ENCODE measurements at regions of chr5 and their contacts with region 1.

Region 1: DNA sequence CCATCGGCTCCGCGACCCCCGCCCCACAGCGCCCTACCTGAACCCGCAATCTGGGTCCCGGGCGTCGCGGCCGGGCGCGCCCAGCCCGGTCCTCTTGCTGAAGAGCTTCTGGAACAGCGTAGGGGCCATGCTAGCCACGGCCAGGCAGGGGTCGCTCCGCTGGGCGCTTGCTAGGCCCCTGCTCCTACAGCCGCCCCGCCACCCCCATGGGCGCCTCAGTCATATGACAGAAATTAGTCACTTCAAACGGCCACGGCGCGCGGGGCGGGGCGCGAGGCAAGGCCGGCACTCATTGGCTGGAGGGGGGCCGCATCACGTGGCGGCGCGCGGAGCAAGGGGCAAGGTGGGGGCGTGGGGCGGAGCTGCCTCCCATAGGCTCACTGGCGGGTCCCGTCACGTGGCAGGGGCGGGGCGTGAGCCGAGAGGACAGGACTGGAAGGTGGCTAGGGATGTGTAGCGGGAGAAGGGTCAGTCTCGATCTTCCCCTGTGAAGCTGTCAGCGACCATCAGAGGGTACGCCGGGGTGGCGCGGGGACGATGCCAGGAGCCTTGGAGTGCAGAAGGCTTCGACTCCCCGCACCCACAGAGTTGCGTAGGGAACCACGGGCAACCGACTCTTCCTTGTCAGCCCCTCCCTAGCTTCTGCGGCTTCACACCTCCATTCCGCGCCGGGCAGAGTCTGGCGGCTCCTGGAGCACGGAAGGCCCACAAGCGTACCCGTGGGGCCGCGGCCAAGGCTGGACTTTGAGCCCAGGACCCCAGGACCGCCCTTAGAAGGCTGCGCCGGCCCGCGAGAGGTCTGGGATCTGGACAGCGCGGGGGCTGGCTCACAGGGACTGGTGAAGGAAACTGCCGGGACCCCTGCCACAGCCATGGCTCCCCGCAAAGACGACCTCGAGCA is at the start of gene FNIP1:
- DNase-seq: peak; percentile 96 to 98 (median 97)
- H3K4me3 ChIP-seq: peak within 1 kb of the TSS; percentile 76 to 90
- H3K4me3 Mint-ChIP-seq: peak within 1 kb of the TSS; percentile 92 to 97 (median 96)
- H3K27ac ChIP-seq: peak within 1 kb of the TSS; percentile 96
- H3K27ac Mint-ChIP-seq: peak within 1 kb of the TSS; percentile 94 to 99 (median 98)
- H3K4me1 ChIP-seq: peaks cover 45% of the 10 kb centered on the region
- H3K4me1 Mint-ChIP-seq: peaks cover 19 to 43% (median 24%) of the 10 kb centered on the region in 4 donors
- H3K27me3 ChIP-seq: no peaks in the 10 kb centered on the region
- H3K27me3 Mint-ChIP-seq: no peaks in the 10 kb centered on the region
- total RNA-seq, gene FNIP1: 34.9 to 35.9 TPM

Region 2: GRCh38 chr5:131634996-131635754 is 161.9 kb before region 1 on chr5 and contains the start of gene RAPGEF6:
- CTCF ChIA-PET with region 1: interaction called, 4 read pairs
- POLR2A ChIA-PET with region 1: interaction called, 35 read pairs
- intact Hi-C with region 1: loop called (anchors 1 kb)
- DNase-seq: peak; percentile 95 to 99 (median 99)
- H3K4me3 ChIP-seq: peak within 1 kb of the TSS; percentile 79 to 98
- H3K4me3 Mint-ChIP-seq: peak within 1 kb of the TSS; percentile 92 to 99 (median 95)
- H3K27ac ChIP-seq: peak within 1 kb of the TSS; percentile 97
- H3K27ac Mint-ChIP-seq: peak within 1 kb of the TSS; percentile 97 to 100 (median 99)
- H3K4me1 ChIP-seq: peaks cover 57% of the 10 kb centered on the region
- H3K4me1 Mint-ChIP-seq: peaks cover 18 to 40% (median 25%) of the 10 kb centered on the region in 4 donors
- H3K27me3 ChIP-seq: no peaks in the 10 kb centered on the region
- H3K27me3 Mint-ChIP-seq: no peaks in the 10 kb centered on the region
- total RNA-seq, gene RAPGEF6: 114 to 121 TPM

Region 3: GRCh38 chr5:131747180-131748105 is 49.6 kb before region 1 on chr5:
- CTCF ChIA-PET with region 1: no interaction called
- POLR2A ChIA-PET with region 1: interaction called, 3 read pairs
- intact Hi-C with region 1: loop called (anchors 5 kb)
- DNase-seq: peak in 4 of 5 donors; percentile 8 to 22 (median 10)
- H3K4me3 ChIP-seq: no peak overlapping the region
- H3K4me3 Mint-ChIP-seq: peak overlapping the region in 7 of 8 donors; percentile 3 to 75 (median 41)
- H3K27ac ChIP-seq: no peak overlapping the region
- H3K27ac Mint-ChIP-seq: peak overlapping the region; percentile 25 to 90 (median 76)
- H3K4me1 ChIP-seq: peaks cover 20% of the 10 kb centered on the region
- H3K4me1 Mint-ChIP-seq: peaks cover 25 to 36% (median 31%) of the 10 kb centered on the region in 4 donors
- H3K27me3 ChIP-seq: no peaks in the 10 kb centered on the region
- H3K27me3 Mint-ChIP-seq: no peaks in the 10 kb centered on the region

Region 4: GRCh38 chr5:132001647-132002561 is 204.9 kb after region 1 on chr5:
- CTCF ChIA-PET with region 1: interaction called, 13 read pairs
- POLR2A ChIA-PET with region 1: interaction called, 16 read pairs
- intact Hi-C with region 1: loop called (anchors 5 kb)
- DNase-seq: no peak
- H3K4me3 ChIP-seq: no peak overlapping the region
- H3K4me3 Mint-ChIP-seq: peak overlapping the region in 6 of 8 donors; percentile 26 to 83 (median 52)
- H3K27ac ChIP-seq: no peak overlapping the region
- H3K27ac Mint-ChIP-seq: peak overlapping the region in 6 of 7 donors; percentile 18 to 80 (median 62)
- H3K4me1 ChIP-seq: peaks cover 66% of the 10 kb centered on the region
- H3K4me1 Mint-ChIP-seq: peaks cover 44 to 68% (median 58%) of the 10 kb centered on the region in 4 donors
- H3K27me3 ChIP-seq: no peaks in the 10 kb centered on the region
- H3K27me3 Mint-ChIP-seq: no peaks in the 10 kb centered on the region